ENCODE measurements at regions of chr5 and their contacts with region 1.

Region 1: DNA sequence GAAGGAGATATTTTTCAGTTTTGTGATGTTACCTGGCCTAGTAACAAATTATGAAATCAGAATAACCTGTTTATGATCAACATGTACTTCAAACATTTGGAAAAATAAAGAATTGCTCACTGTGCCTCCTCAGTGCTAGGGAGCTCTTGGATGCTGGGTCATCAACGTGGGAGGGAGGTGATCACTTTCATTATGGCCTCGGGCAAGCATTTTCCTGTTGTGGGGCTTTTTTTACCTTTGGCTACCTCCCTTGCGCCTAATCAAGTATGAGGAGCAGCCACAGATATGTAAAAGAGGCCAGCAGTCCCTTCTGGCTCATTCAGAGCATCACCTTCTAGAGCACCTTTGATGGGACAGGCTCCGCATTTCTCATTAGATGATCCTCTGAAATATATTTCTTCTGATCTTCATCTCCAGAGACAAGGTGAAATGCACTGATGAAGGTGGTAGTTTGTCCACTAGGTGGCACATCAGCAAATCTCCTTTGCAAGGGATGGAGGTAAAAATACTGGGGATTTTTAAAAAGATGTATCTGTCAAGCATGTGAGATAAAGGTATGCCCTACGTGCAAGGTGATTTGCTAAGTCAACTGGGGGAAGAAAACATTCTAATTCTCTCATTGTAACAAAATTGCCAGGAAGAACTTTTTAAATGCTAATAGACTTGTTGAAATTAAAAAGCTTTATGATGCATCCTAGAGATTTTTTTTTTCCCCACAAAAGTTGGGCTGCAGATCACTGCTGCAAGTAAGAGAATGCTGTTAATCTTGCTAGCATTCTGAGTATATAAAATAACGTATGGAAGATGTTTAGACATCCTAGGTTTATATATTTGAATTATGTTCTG is 218.2 kb downstream of the MAST4 start:
- DNase-seq: peak; percentile 21 to 46 (median 45)
- H3K4me3 ChIP-seq: no peak overlapping the region
- H3K4me3 Mint-ChIP-seq: no peak overlapping the region
- H3K27ac ChIP-seq: no peak overlapping the region
- H3K27ac Mint-ChIP-seq: no peak overlapping the region
- H3K4me1 ChIP-seq: peaks cover 9 to 10% of the 10 kb centered on the region in 2 donors
- H3K4me1 Mint-ChIP-seq: peaks cover 9% of the 10 kb centered on the region
- H3K27me3 ChIP-seq: no peaks in the 10 kb centered on the region
- H3K27me3 Mint-ChIP-seq: peaks cover 2 to 10% (median 8%) of the 10 kb centered on the region in 3 donors
- CTCF ChIP-seq: peak; percentile 83

Region 2: DNA sequence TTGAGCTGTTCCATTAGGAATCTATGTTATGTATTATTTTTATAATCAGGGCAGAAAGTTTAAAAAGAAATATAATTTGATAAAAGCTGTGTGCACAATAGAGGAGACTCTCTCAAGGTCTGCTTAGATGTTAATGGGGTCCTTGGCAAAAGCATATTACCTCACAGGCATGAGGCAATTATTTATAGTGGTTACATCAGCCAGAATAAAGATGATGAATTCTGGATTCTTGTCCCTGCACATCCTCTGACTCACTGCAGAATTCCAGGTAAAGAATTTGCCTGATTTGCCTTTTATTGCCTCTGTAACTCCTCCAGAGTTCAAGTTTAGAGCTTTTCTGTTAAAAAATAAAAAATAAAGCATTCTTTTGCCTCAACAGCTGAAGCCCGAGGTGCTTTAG is 35.4 kb after region 1 on chr5:
- intact Hi-C with region 1: no loop called
- DNase-seq: peak in 2 of 3 donors; percentile 49 to 69
- H3K4me3 ChIP-seq: peak overlapping the region in 1 of 3 experiments; percentile 52
- H3K4me3 Mint-ChIP-seq: no peak overlapping the region
- H3K27ac ChIP-seq: no peak overlapping the region
- H3K27ac Mint-ChIP-seq: peak overlapping the region in 3 of 7 donors; percentile 45 to 82 (median 53)
- H3K4me1 ChIP-seq: peaks cover 48 to 53% of the 10 kb centered on the region in 2 donors
- H3K4me1 Mint-ChIP-seq: peaks cover 47% of the 10 kb centered on the region
- H3K27me3 ChIP-seq: no peaks in the 10 kb centered on the region
- H3K27me3 Mint-ChIP-seq: peaks cover 0 to 5% (median 0%) of the 10 kb centered on the region in 3 donors
- CTCF ChIP-seq: no peak

Region 3: GRCh38 chr5:66863243-66864170 is 49.1 kb after region 1 on chr5:
- intact Hi-C with region 1: loop called in 1 of 2 experiments (anchors 2 kb)
- DNase-seq: no peak
- H3K4me3 ChIP-seq: no peak overlapping the region
- H3K4me3 Mint-ChIP-seq: peak overlapping the region in 1 of 2 donors; percentile 17
- H3K27ac ChIP-seq: no peak overlapping the region
- H3K27ac Mint-ChIP-seq: no peak overlapping the region
- H3K4me1 ChIP-seq: no peaks in the 10 kb centered on the region
- H3K4me1 Mint-ChIP-seq: peaks cover 9% of the 10 kb centered on the region
- H3K27me3 ChIP-seq: no peaks in the 10 kb centered on the region
- H3K27me3 Mint-ChIP-seq: peaks cover 3 to 10% (median 9%) of the 10 kb centered on the region in 3 donors
- CTCF ChIP-seq: no peak

Region 4: GRCh38 chr5:66882592-66883227 is 68.3 kb after region 1 on chr5:
- intact Hi-C with region 1: loop called in 1 of 2 experiments (anchors 10 kb)
- DNase-seq: no peak
- H3K4me3 ChIP-seq: no peak overlapping the region
- H3K4me3 Mint-ChIP-seq: no peak overlapping the region
- H3K27ac ChIP-seq: no peak overlapping the region
- H3K27ac Mint-ChIP-seq: no peak overlapping the region
- H3K4me1 ChIP-seq: no peaks in the 10 kb centered on the region
- H3K4me1 Mint-ChIP-seq: peaks cover 9% of the 10 kb centered on the region
- H3K27me3 ChIP-seq: no peaks in the 10 kb centered on the region
- H3K27me3 Mint-ChIP-seq: peaks cover 0 to 7% (median 3%) of the 10 kb centered on the region in 3 donors
- CTCF ChIP-seq: no peak

Measured in CD14-positive monocyte (primary cell).